Pancreas (tissue), 10 donors: ENCODE measurements at regions of chr1 and their contacts with region 1.

Region 1: DNA sequence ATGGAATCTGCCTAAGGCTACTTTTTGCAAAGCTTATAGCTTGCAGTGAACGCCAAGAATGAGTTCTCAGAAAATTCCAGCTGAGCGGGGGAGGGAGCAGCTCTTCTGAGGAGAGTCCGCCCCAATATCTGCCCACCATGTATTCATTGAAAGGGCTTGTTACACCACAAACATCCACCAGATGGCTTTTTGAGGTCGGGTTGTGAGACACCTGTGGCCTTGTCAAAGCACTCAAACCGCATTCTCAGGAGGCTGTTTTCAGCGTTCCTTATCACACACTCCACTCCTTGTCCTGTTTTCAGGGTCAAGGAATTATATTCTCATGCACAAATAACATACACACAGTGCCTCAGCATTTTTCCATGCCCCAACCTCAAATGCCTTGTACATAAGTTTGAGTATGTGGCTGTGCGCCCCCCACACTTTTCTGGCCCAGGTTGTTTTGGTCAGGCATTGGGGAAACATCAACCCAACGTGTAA is 3.9 kb upstream of the C4BPB start:
- DNase-seq: peak in 4 of 6 donors; percentile 28 to 69 (median 51)
- ATAC-seq: peak; percentile 63 to 77 (median 73)
- H3K4me3 ChIP-seq: no peak overlapping the region
- H3K27ac ChIP-seq: no peak overlapping the region
- H3K4me1 ChIP-seq: peaks cover 9 to 26% (median 15%) of the 10 kb centered on the region in 3 donors
- H3K27me3 ChIP-seq: no peaks in the 10 kb centered on the region
- CTCF ChIP-seq: peak; percentile 44 to 61 (median 48)

Region 2: DNA sequence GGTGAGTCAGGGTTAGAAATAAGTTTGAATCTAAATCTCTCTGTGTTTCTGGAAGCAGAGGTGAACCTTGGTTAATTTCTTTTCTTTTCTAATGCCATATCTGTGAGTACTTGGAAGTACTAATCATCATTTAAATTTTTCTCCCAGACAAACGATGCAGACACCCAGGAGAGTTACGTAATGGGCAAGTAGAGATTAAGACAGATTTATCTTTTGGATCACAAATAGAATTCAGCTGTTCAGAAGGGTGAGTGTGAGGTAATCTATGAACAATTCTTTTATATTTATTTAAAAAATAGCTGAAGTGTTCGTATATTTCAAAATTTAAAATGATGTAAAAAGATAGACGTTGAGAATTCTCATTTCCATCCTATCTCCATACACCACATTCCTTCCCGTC is 30.5 kb after region 1 on chr1:
- intact Hi-C with region 1: no loop called
- DNase-seq: no peak
- ATAC-seq: no peak
- H3K4me3 ChIP-seq: no peak overlapping the region
- H3K27ac ChIP-seq: no peak overlapping the region
- H3K4me1 ChIP-seq: no peaks in the 10 kb centered on the region
- H3K27me3 ChIP-seq: no peaks in the 10 kb centered on the region
- CTCF ChIP-seq: no peak

Region 3: DNA sequence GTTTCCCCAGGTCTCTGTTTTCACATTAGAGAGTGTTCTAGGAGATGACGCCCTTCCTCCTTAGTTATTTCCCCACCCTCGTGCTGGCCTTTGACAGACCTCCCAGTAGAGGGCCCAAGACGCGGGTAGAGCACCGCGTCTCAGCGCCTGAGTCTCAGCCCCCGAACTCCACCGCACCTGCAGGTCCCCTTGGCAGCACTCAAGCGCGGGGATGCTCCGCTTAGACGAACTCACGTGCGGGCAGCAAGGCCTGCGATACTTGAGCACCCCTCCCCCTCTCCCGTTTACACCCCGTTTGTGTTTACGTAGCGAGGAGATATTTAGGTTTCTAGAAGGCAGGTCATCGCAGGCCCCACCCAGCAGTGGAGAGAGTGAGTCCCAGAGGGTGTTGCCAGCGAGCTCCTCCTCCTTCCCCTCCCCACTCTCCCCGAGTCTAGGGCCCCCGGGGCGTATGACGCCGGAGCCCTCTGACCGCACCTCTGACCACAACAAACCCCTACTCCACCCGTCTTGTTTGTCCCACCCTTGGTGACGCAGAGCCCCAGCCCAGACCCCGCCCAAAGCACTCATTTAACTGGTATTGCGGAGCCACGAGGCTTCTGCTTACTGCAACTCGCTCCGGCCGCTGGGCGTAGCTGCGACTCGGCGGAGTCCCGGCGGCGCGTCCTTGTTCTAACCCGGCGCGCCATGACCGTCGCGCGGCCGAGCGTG is 236.5 kb after region 1 on chr1 and contains the start of gene CD55:
- intact Hi-C with region 1: loop called in 1 of 3 experiments (anchors 10 kb)
- DNase-seq: peak; percentile 87 to 96 (median 91)
- ATAC-seq: peak; percentile 82 to 92 (median 88)
- H3K4me3 ChIP-seq: peak within 1 kb of the TSS; percentile 57 to 89 (median 72)
- H3K27ac ChIP-seq: peak within 1 kb of the TSS; percentile 77 to 95 (median 86)
- H3K4me1 ChIP-seq: peaks cover 16 to 38% (median 31%) of the 10 kb centered on the region in 3 donors
- H3K27me3 ChIP-seq: no peaks in the 10 kb centered on the region
- CTCF ChIP-seq: no peak
- total RNA-seq, gene CD55: 8.6 to 25.7 (median 15.7) TPM

Region 4: DNA sequence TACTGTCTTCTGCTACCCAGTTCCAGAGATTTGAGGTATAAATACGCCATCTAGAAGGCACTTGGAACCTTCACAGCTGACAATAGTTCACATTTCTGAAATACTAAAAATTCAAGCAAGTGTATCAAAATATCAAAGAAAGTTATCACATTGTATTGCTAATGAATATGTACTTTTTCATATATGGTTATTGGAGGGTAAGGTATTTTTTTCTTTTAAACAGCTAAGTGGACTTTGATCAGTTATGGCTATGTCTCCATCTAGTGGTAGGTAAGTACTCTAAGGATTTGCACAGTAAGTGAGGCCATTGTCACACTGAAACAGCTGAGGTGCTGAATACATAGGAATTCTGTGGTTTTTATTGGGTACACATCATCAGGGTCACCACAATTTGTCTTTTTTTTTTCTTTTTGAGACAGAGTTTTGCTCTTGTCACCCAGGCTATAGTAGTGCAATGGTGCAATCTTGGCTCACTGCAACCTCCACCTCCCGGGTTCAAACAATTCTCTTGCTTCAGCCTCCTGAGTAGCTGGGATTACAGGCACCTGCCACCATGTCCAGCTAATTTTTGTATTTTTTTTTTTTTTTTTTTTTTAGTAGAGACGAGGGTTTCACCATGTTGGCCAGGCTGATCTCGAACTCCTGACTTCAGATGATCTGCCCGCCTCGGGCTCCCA is 320.2 kb after region 1 on chr1:
- intact Hi-C with region 1: loop called in 2 of 3 experiments (anchors 5 to 10 kb)
- DNase-seq: no peak
- ATAC-seq: peak; percentile 79 to 96 (median 93)
- H3K4me3 ChIP-seq: no peak overlapping the region
- H3K27ac ChIP-seq: no peak overlapping the region
- H3K4me1 ChIP-seq: peaks cover 0 to 3% (median 0%) of the 10 kb centered on the region in 3 donors
- H3K27me3 ChIP-seq: no peaks in the 10 kb centered on the region
- CTCF ChIP-seq: peak; percentile 56 to 75 (median 69)